Right cardiac atrium (tissue), 5 donors: ENCODE measurements at regions of chr9 and their contacts with region 1.

Region 1: DNA sequence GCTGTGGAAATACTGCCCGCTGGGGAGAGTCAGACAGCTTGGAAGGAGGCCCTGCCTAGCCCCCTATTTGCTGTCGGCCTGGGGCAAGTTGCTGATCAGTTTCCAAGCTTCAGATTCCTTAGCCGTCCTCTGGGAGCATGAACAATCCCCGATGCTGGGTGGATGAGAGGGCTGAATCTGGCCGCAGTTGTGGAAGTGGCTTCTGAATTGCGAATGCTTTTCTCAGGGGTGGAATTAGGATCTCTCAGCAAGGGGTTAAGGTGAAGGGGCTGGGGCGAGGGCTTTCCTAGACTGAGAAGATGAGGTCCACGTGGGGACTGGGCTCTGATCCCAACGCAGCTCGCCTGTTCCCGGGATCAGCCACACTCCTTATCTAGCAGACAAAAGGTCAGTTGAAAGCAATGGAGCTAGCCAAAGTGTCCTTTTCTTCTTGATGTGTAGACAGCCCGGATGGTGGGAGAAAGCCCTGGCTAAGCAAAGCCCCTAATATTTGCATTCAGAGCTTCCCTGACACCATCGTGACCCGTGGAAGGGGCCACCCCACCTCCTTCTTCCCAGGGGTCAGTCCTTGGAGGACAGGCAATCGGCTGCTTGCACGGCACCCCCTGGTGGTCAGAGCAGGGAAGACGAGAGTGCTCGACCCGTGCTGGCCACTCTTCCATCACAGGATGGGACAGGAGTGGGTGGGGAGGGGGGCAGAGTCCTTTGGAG is 54.9 kb downstream of the COL15A1 start:
- DNase-seq: peak; percentile 91 to 95 (median 95)
- ATAC-seq: peak; percentile 86 to 88
- H3K4me3 ChIP-seq: no peak overlapping the region
- H3K27ac ChIP-seq: peak overlapping the region; percentile 54
- H3K4me1 ChIP-seq: peaks cover 7% of the 10 kb centered on the region
- H3K27me3 ChIP-seq: no peaks in the 10 kb centered on the region

Region 2: GRCh38 chr9:99076483-99077171 is 78.0 kb after region 1 on chr9:
- intact Hi-C with region 1: no loop called
- DNase-seq: peak in 2 of 3 donors; percentile 62 to 70
- ATAC-seq: peak in 1 of 2 donors; percentile 47
- H3K4me3 ChIP-seq: no peak overlapping the region
- H3K27ac ChIP-seq: no peak overlapping the region
- H3K4me1 ChIP-seq: peaks cover 7% of the 10 kb centered on the region
- H3K27me3 ChIP-seq: no peaks in the 10 kb centered on the region

Region 3: DNA sequence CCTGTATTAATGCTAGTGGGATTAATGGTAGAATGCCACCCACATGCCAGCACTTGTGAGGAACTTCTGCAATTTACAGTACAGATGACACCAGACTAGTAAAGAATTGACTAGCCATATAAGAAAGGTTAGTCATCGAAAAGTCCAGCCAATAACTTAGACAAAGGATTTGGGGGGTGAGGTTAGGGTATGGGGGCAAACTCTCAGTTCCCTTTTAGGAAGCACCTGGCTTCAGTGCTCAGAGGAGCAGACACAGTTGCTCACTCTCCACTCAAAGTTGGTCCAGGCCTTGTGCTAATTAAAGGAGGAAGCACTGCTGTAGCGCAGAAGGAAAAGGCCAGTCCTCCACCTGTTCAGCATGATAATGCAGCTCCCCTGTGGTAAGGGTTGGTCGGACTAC is 131.5 kb after region 1 on chr9:
- intact Hi-C with region 1: loop called in 2 of 4 experiments (anchors 10 kb)
- DNase-seq: no peak
- ATAC-seq: no peak
- H3K4me3 ChIP-seq: no peak overlapping the region
- H3K27ac ChIP-seq: no peak overlapping the region
- H3K4me1 ChIP-seq: peaks cover 2% of the 10 kb centered on the region
- H3K27me3 ChIP-seq: no peaks in the 10 kb centered on the region